ENCODE measurements at regions of chr10 and their contacts with region 1.

Region 1: DNA sequence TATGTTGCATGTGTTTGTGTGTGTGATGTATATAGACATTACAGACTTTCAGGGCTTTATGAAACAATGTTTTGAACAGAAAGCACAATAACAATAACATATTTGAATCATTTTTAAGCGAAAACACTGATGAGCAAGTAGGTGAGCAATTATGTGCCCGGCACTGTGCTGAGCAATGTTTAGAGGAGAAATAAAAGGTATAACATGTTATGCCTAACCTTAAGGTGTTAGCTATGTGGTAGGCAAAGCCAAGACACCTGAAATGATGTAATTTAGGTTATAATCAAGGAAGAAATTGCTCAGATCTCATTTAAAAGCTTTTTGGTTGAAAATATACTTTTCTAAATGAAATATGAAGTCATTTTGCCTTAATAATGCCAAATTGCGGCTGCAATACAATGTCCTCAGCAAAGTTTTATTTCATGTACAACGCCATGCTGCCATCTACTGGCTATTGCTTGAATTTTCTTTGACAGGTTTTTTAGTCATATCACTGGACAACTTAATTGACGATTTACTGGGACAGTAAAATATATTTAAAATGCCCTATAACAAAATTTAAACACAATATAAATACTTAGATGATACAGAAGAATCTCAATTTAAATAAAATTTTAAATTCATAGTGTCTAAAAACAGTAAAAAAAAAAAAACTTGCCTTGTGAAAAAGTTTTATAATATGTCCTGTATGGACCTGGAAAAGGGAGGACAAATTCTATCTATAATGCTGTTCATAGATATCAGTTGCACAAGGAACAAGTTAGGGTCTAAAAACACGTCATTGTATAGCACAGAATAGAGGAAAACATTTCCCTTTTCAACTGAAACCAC is 131.1 kb upstream of the CDK1 start:
- DNase-seq: no peak
- H3K4me3 ChIP-seq: no peak overlapping the region
- H3K27ac ChIP-seq: no peak overlapping the region
- H3K4me1 ChIP-seq: peaks cover 0 to 21% (median 5%) of the 10 kb centered on the region in 6 donors
- H3K27me3 ChIP-seq: no peaks in the 10 kb centered on the region
- CTCF ChIP-seq: peak; percentile 31 to 76 (median 71)
- POLR2A ChIP-seq: no peak

Region 2: DNA sequence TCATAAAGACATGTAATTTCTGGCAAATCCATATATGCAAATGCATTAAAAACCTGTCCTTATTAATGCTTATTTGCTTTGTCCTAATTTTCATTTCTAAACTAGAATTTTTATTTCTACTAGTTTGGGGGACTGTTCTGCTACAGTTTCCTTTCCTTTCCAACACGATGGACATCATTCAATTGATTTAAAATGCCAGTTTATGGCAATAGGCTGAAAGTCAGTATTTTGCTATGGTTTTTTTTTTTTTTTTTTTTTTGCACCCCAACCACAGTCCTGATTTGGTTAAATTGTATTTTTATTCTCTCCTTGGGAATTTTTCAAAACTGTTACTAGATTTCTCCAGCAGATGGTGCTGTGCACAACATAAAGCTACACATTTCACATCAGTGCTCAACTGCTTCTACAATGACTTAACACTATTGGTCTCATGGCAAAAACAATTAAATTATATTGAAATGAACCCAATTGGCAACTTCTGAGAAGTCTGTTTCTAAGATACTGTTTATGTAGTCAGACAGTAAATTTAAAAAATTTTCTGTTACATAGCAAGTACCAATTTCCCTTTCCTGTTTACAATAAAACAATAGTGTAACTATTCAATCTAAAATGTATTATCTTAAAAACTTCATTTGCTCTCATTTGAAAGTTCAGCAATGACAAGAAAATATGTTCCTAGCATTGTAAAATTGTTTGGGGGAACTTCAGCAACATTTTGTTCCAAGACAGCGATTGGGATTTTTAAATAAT is 547.0 kb before region 1 on chr10:
- intact Hi-C with region 1: loop called (anchors 10 kb)
- DNase-seq: no peak
- H3K4me3 ChIP-seq: no peak overlapping the region
- H3K27ac ChIP-seq: no peak overlapping the region
- H3K4me1 ChIP-seq: no peaks in the 10 kb centered on the region
- H3K27me3 ChIP-seq: no peaks in the 10 kb centered on the region
- CTCF ChIP-seq: peak in 9 of 11 experiments; percentile 32 to 67 (median 54)
- POLR2A ChIP-seq: no peak

Region 3: DNA sequence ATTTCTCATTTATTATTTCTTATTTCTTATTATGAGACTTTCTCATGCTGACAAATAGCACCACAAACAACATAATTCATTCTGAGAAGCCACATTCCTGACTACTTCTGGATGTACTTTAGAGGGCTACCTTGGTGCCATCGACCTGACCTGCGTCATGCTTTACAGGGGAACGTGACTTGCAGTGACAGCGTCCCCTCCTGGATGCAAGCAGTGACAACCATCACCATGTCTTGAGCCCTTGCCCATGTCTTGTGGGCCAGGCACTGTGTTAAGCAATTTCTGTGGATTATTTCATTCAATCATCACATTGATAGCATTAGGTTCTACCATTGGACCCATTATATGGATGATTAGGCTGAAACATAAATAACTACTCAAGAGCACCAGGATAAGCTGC is 394.5 kb before region 1 on chr10:
- intact Hi-C with region 1: no loop called
- DNase-seq: no peak
- H3K4me3 ChIP-seq: no peak overlapping the region
- H3K27ac ChIP-seq: no peak overlapping the region
- H3K4me1 ChIP-seq: no peaks in the 10 kb centered on the region
- H3K27me3 ChIP-seq: no peaks in the 10 kb centered on the region
- CTCF ChIP-seq: no peak
- POLR2A ChIP-seq: no peak

Region 4: GRCh38 chr10:60444494-60445064 is 202.6 kb before region 1 on chr10:
- intact Hi-C with region 1: loop called (anchors 5 kb)
- DNase-seq: no peak
- H3K4me3 ChIP-seq: no peak overlapping the region
- H3K27ac ChIP-seq: no peak overlapping the region
- H3K4me1 ChIP-seq: peaks cover 0 to 22% (median 15%) of the 10 kb centered on the region in 6 donors
- H3K27me3 ChIP-seq: no peaks in the 10 kb centered on the region
- CTCF ChIP-seq: peak in 8 of 11 experiments; percentile 23 to 56 (median 50)
- POLR2A ChIP-seq: no peak